ENCODE measurements at regions of chr17 and their contacts with region 1.

Region 1: DNA sequence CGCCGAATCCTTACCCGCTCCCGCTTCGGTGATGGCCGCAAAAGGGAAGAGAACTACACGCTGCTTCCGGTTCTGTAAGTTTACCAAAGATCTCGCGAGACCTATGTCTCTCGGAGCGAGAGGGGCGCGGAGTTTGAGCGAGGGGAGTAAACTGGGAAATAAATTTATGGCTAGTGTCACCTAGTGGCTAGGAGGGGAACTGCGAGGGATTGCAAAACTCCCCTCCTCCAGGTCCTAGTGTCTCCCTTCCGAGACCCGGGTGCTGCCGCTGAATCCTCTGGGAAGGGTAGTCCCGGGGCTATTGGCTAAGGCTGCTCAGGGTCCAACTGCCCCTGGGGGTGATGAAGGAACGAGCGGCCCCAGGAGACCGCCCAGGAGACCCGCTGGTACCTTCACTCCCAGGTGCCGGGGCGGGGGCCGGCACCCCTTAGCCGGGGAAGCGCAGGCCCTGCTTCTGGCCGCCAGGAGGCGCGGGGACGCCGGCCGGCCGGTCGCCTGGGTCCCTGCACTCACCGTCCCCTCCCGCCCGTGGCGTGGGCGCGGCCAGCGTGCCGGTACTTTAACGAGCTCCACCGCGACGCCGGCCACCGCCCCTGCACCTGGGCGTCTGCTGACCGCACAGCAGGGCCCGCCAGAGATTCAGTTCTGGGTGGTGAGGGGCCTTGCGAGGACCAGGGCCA is at the start of gene RPL26:
- DNase-seq: peak; percentile 96
- ATAC-seq: peak; percentile 92
- H3K4me3 Mint-ChIP-seq: peak within 1 kb of the TSS; percentile 100
- H3K27ac Mint-ChIP-seq: peak within 1 kb of the TSS; percentile 99
- H3K4me1 Mint-ChIP-seq: peaks cover 50% of the 10 kb centered on the region
- H3K27me3 Mint-ChIP-seq: no peaks in the 10 kb centered on the region
- total RNA-seq, gene RPL26: 3,064 to 3,721 TPM

Region 2: DNA sequence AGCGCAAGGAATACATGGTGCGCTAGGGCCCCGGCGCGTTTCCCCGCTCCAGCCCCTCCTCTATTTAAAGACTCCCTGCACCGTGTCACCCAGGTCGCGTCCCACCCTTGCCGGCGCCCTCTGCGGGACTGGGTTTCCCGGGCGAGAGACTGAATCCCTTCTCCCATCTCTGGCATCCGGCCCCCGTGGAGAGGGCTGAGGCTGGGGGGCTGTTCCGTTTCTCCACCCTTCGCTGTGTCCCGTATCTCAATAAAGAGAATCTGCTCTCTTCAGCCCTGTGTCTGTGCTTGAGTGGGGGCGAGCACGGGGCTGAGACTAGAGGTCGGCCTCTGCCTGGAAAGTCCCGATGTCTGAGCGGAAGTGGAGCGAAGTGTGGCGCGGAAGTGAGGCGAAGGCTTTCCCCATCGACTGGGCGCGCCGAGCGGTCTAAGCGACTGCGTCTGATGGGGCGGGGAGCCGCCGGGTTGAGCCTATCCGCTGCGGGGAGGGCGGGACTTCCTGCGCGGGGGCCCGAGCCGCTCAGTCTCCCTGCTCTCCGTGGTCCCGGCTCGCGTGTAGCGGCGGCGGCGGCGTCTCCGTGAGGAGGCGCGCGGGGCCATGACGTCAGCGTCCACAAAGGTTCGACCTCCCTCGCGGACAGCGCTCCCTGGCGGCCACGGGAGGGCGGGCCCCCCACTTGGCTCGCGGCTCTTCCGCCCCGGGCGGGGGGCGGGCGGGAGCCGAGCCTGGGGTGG is 1368.9 kb before region 1 on chr17:
- CTCF ChIA-PET with region 1: no interaction called
- POLR2A ChIA-PET with region 1: no interaction called
- intact Hi-C with region 1: loop called in 1 of 2 experiments (anchors 5 kb)
- DNase-seq: peak; percentile 99
- ATAC-seq: peak; percentile 88
- H3K4me3 Mint-ChIP-seq: peak overlapping the region; percentile 92
- H3K27ac Mint-ChIP-seq: peak overlapping the region; percentile 99
- H3K4me1 Mint-ChIP-seq: peaks cover 54% of the 10 kb centered on the region
- H3K27me3 Mint-ChIP-seq: no peaks in the 10 kb centered on the region

Region 3: GRCh38 chr17:8156246-8156992 is 226.9 kb before region 1 on chr17:
- CTCF ChIA-PET with region 1: no interaction called
- POLR2A ChIA-PET with region 1: no interaction called
- intact Hi-C with region 1: loop called in 1 of 2 experiments (anchors 1 kb)
- DNase-seq: peak; percentile 100
- ATAC-seq: peak; percentile 75
- H3K4me3 Mint-ChIP-seq: no peak overlapping the region
- H3K27ac Mint-ChIP-seq: no peak overlapping the region
- H3K4me1 Mint-ChIP-seq: peaks cover 49% of the 10 kb centered on the region
- H3K27me3 Mint-ChIP-seq: no peaks in the 10 kb centered on the region

Region 4: DNA sequence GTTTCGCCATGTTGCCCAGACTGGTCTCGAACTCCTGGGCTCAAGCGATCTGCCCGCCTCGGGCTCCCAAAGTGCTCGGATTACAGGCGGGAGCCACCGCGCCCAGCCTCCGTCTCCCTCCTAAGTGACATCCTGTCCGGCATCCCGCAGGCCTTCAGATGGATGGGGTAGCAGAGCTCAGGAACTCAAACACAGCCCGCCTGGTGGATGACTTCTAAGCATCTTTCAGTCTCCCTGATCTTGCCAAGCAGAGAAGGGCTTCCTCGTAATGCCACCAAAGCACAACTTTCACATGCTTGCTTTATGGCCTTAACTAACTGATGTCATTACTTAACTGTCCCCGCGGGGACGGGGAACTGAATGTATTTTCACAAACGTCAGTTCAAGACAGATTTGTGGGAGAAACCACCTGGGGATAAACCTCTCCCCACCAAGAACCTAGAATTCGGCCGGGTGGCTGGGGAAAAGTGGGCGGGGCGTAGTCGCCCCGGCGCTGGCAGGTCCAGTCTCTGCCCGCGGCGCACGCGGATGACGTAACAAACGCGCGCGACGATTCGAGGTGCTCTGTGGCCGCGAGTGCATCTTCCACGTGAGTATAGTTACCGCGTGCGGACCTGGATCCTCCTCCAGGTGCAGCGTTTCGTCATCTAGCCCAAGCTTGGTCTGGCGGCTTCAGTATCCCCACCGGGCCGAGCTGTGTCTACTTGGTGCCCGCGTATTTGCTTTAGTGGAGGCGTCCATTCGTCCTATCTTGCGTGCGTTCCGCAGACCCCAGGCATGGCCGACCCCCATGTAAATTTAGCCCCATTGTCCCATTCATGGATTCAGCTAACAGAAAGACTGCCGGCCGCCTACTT is 134.3 kb before region 1 on chr17 and contains the start of gene PFAS:
- CTCF ChIA-PET with region 1: no interaction called
- POLR2A ChIA-PET with region 1: interaction called, 9 read pairs
- intact Hi-C with region 1: loop called (anchors 1 to 5 kb)
- DNase-seq: peak; percentile 98
- ATAC-seq: peak; percentile 57
- H3K4me3 Mint-ChIP-seq: peak within 1 kb of the TSS; percentile 94
- H3K27ac Mint-ChIP-seq: peak within 1 kb of the TSS; percentile 98
- H3K4me1 Mint-ChIP-seq: peaks cover 36% of the 10 kb centered on the region
- H3K27me3 Mint-ChIP-seq: no peaks in the 10 kb centered on the region
- total RNA-seq, gene PFAS: 113 to 141 TPM

Region 5: GRCh38 chr17:8630802-8631553 is 247.7 kb after region 1 on chr17:
- CTCF ChIA-PET with region 1: no interaction called
- POLR2A ChIA-PET with region 1: no interaction called
- intact Hi-C with region 1: loop called (anchors 1 kb)
- DNase-seq: peak; percentile 96
- ATAC-seq: peak; percentile 98
- H3K4me3 Mint-ChIP-seq: peak overlapping the region; percentile 87
- H3K27ac Mint-ChIP-seq: no peak overlapping the region
- H3K4me1 Mint-ChIP-seq: peaks cover 4% of the 10 kb centered on the region
- H3K27me3 Mint-ChIP-seq: peaks cover 33% of the 10 kb centered on the region

Region 6: GRCh38 chr17:8894673-8895578 is 511.6 kb after region 1 on chr17:
- CTCF ChIA-PET with region 1: no interaction called
- POLR2A ChIA-PET with region 1: no interaction called
- intact Hi-C with region 1: loop called in 1 of 2 experiments (anchors 5 kb)
- DNase-seq: peak; percentile 73
- ATAC-seq: peak; percentile 39
- H3K4me3 Mint-ChIP-seq: no peak overlapping the region
- H3K27ac Mint-ChIP-seq: peak overlapping the region; percentile 20
- H3K4me1 Mint-ChIP-seq: peaks cover 68% of the 10 kb centered on the region
- H3K27me3 Mint-ChIP-seq: no peaks in the 10 kb centered on the region

Measured in activated CD4-positive, alpha-beta T cell treated with anti-CD3 and anti-CD28 coated beads for 36 hours (primary cell).